Body of pancreas (tissue), 4 donors: ENCODE measurements at regions of chr17 and their contacts with region 1.

Region 1: GRCh38 chr17:54992797-54993639 is 24.5 kb downstream of the STXBP4 start:
- DNase-seq: peak in 1 of 4 donors; percentile 13
- ATAC-seq: peak; percentile 73
- H3K4me3 ChIP-seq: no peak overlapping the region
- H3K27ac ChIP-seq: no peak overlapping the region
- H3K4me1 ChIP-seq: no peaks in the 10 kb centered on the region
- H3K27me3 ChIP-seq: no peaks in the 10 kb centered on the region
- CTCF ChIP-seq: peak; percentile 33 to 76 (median 65)
- POLR2A ChIP-seq: no peak

Region 2: DNA sequence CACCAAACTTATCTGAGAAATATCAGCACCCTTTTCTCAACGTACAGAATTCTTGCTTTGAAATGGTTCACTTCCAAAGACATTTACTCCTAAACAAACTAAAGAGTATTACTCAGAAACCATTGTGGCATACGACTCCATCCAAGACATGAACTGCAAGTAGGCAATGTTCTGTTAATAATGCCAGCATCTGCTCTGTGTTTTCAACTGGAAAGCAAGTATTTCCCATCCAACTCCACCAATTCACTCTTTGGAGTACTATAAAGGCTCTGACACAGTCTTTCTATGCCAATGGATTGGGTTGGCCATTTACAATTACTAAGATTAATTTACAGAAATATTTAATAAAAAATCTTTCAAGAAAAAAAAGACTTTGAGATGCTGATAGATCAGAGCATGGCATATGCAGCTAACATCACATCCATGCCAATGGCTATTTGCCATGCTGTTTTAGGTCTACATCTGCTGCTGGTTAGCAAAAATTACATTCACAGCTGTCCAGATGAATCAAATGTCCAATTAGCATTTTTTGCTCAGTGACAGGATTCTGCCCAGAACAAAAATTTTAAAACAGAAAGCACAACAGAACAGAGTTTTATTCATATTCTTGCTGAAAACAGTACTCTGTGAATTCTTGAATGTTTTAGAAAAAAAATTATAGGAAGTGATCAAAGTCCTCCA is 205.8 kb after region 1 on chr17:
- intact Hi-C with region 1: no loop called
- DNase-seq: no peak
- ATAC-seq: no peak
- H3K4me3 ChIP-seq: no peak overlapping the region
- H3K27ac ChIP-seq: no peak overlapping the region
- H3K4me1 ChIP-seq: no peaks in the 10 kb centered on the region
- H3K27me3 ChIP-seq: no peaks in the 10 kb centered on the region
- CTCF ChIP-seq: no peak
- POLR2A ChIP-seq: no peak

Region 3: DNA sequence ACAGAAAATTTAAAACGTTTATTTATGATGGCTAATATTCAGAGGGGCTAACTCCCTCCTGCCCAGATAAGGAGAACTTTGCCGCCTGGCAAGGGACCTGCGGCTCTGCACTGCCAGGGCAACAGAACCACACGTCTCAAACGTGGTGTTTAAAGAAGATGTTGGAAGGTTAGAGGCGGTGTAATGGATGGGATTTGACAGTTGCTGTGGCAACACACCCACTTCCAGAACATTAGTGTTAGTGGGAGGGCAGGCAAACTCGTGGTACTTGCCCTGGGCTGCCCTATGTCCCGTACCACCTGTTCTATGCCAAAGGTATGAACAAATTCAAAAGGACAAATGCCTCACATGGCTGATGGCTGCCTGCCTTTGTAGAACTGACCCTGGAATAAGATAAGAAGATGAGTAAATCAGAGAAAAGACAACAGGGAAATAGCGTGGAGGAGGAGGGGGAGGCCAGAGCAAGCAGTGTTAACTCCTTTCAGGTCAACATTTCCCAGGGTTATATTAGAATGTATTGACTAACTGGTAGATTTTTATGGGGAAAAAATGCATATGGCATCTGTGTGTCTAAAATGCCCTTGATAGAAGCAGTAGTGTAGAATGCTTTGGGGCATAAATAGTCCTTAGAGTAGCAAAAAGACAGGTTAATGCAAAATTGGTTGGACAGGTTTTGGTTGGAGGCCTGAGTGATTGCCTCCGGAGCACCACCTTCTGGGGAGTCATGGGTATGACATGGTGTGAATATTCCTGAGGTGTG is 302.6 kb after region 1 on chr17:
- intact Hi-C with region 1: loop called (anchors 10 kb)
- DNase-seq: peak; percentile 62 to 75 (median 62)
- ATAC-seq: peak; percentile 89
- H3K4me3 ChIP-seq: no peak overlapping the region
- H3K27ac ChIP-seq: peak overlapping the region in 2 of 4 donors; percentile 19 to 33
- H3K4me1 ChIP-seq: peaks cover 4% of the 10 kb centered on the region
- H3K27me3 ChIP-seq: no peaks in the 10 kb centered on the region
- CTCF ChIP-seq: peak; percentile 57 to 87 (median 82)
- POLR2A ChIP-seq: no peak

Region 4: GRCh38 chr17:55348749-55349354 is 355.8 kb after region 1 on chr17:
- intact Hi-C with region 1: loop called (anchors 10 kb)
- DNase-seq: peak; percentile 44 to 59 (median 48)
- ATAC-seq: peak; percentile 72
- H3K4me3 ChIP-seq: no peak overlapping the region
- H3K27ac ChIP-seq: no peak overlapping the region
- H3K4me1 ChIP-seq: no peaks in the 10 kb centered on the region
- H3K27me3 ChIP-seq: no peaks in the 10 kb centered on the region
- CTCF ChIP-seq: peak; percentile 68 to 86 (median 74)
- POLR2A ChIP-seq: no peak